ENCODE measurements at regions of chr6 and their contacts with region 1.

Region 1: DNA sequence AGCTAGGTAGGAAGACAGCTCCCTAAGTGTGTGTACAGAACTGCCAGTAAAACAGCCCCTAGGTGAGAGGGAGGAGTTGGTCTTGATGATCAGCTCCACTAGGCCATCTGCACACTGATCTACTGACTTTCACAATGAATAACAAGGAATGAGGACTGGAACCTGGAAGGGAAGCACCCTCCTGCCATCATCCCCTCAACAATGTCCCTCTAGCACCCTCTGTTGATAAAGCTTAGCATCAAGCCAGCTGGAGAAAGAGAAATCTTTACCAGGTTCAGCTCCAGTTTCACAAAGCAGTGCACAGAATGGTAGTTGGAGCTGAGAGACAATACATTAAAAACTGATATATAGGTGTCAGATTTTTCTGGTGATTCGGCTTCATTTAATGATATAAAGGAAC is 57.2 kb upstream of the IRAK1BP1 start:
- DNase-seq: peak; percentile 4
- H3K4me3 ChIP-seq: no peak overlapping the region
- H3K27ac ChIP-seq: no peak overlapping the region
- H3K27me3 ChIP-seq: no peaks in the 10 kb centered on the region
- CTCF ChIP-seq: peak; percentile 79

Region 2: DNA sequence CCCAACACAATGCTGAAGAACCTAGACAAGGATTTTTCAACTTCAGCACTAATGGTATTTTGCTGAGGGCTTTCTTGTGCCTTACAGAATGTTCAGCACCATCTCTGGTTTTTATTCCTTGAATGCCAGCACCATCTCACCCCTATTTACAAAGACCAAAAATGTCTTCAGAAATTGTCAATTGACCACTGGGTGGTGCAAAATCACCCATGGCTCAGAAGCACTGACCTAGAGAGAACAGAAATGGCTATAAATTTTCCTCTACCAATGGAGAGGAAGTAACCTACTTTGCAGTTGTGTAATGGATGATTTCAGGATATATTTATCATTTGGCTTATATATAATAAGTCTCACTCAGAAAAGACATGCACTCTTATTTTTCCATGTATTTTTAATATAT is 373.8 kb before region 1 on chr6:
- CTCF ChIA-PET with region 1: interaction called, 13 read pairs
- POLR2A ChIA-PET with region 1: no interaction called
- DNase-seq: peak; percentile 8
- H3K4me3 ChIP-seq: no peak overlapping the region
- H3K27ac ChIP-seq: no peak overlapping the region
- H3K27me3 ChIP-seq: no peaks in the 10 kb centered on the region
- CTCF ChIP-seq: peak; percentile 53